Heart right ventricle (tissue), 16 donors: ENCODE measurements at regions of chr5 and their contacts with region 1.

Region 1: DNA sequence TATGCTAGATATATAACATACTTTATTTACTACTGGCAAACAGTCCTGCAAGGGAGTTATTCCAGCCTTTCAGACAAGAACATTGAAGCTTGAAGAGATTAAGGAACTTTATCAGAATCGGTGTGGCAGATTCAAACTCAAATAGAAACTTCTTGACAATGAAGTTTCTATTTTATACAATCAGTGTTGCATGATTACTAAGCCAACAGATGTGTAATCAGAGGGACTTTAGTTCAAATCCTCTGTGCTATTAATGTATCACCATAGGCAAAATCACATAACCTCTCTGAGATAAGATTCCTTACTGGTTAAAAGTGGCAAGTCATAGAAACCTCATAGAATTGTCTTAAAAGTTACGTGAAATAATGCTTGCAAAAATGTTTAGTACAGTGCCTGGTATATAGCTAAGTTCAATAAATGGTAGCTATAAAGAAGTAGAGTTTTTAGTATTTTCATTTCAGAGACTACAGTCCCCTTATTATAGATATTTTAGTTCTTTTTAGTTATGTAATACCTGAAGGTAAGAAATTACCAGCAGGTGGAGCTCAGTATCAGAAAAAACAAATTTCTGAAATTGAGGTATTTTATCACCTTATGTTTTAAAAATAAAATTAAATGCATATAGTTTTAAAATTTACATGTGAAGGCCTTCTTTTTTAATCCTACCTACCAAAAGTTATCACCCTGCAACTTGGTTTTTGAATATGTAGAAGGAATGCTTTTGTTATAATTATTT is 172.1 kb downstream of the FER start:
- DNase-seq: no peak
- ATAC-seq: no peak
- H3K4me3 ChIP-seq: no peak overlapping the region
- H3K27ac ChIP-seq: no peak overlapping the region
- H3K4me1 ChIP-seq: peaks cover 0 to 3% (median 0%) of the 10 kb centered on the region in 9 donors
- H3K27me3 ChIP-seq: no peaks in the 10 kb centered on the region
- CTCF ChIP-seq: peak in 6 of 9 donors; percentile 28 to 49 (median 34)

Region 2: GRCh38 chr5:108541836-108542235 is 377.9 kb before region 1 on chr5:
- intact Hi-C with region 1: no loop called
- DNase-seq: no peak
- ATAC-seq: no peak
- H3K4me3 ChIP-seq: no peak overlapping the region
- H3K27ac ChIP-seq: no peak overlapping the region
- H3K4me1 ChIP-seq: no peaks in the 10 kb centered on the region
- H3K27me3 ChIP-seq: no peaks in the 10 kb centered on the region
- CTCF ChIP-seq: no peak

Region 3: GRCh38 chr5:108818613-108819272 is 101.0 kb before region 1 on chr5:
- intact Hi-C with region 1: no loop called
- DNase-seq: no peak
- ATAC-seq: no peak
- H3K4me3 ChIP-seq: no peak overlapping the region
- H3K27ac ChIP-seq: no peak overlapping the region
- H3K4me1 ChIP-seq: peaks cover 0 to 26% (median 10%) of the 10 kb centered on the region in 9 donors
- H3K27me3 ChIP-seq: no peaks in the 10 kb centered on the region
- CTCF ChIP-seq: no peak

Region 4: GRCh38 chr5:109105631-109106267 is 186.0 kb after region 1 on chr5:
- intact Hi-C with region 1: no loop called
- DNase-seq: peak in 1 of 2 donors; percentile 13
- ATAC-seq: peak; percentile 58 to 95 (median 88)
- H3K4me3 ChIP-seq: no peak overlapping the region
- H3K27ac ChIP-seq: peak overlapping the region in 4 of 10 donors; percentile 22 to 51 (median 32)
- H3K4me1 ChIP-seq: peaks cover 0 to 24% (median 4%) of the 10 kb centered on the region in 9 donors
- H3K27me3 ChIP-seq: no peaks in the 10 kb centered on the region
- CTCF ChIP-seq: no peak

Region 5: GRCh38 chr5:109329333-109330237 is 409.8 kb after region 1 on chr5:
- intact Hi-C with region 1: loop called in 1 of 10 experiments (anchors 5 kb)
- DNase-seq: no peak
- ATAC-seq: peak; percentile 59 to 78 (median 75)
- H3K4me3 ChIP-seq: no peak overlapping the region
- H3K27ac ChIP-seq: no peak overlapping the region
- H3K4me1 ChIP-seq: peaks cover 0 to 18% (median 4%) of the 10 kb centered on the region in 9 donors
- H3K27me3 ChIP-seq: no peaks in the 10 kb centered on the region
- CTCF ChIP-seq: no peak